Activated T-helper 1 cell treated with anti-CD3 and anti-CD28 coated beads, Interleukin-12 subunit alpha, Interleukin-12 subunit beta, Interleukin-2, Interleukin-4 antibody, amounts not matched to agents 30 ng/mL and 10 ng/mL and 1 ng/mL, durations not matched to agents 14 hours and 24 hours and 36 hours (primary cell): ENCODE measurements at regions of chr10 and their contacts with region 1.

Region 1: DNA sequence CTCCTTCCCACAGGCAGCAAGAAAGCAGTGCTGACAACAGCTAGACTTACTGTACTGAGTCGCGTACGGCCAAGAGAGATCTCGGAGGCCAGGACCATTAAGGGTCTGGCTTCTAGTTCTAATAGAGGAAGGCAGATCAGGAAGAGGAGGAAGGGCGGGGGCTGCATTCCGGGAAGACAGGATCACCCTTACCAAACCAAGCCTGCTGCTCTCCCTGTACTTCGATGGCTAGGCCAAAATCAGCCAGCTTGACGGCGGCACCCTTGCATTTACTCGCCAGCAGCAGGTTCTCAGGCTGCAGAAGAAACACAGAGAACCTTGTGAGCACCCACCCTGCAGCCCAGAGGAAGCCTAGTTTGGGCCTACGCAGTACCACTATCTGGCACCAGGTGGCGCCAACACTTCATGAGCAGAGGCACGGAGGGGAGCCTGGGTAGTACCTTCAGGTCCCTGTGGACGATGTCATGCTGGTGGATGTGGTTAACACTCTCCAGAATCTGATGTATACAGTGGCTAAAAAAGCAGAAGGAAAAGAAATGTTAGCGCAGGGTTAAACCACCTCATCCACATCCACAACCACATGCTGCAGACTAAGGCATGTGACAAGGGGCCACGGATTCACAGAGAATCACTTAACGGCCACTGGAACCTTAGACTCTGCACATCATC is 25.4 kb downstream of the CAMK2G start:
- DNase-seq: peak; percentile 88
- H3K4me3 Mint-ChIP-seq: peak overlapping the region; percentile 64
- H3K27ac Mint-ChIP-seq: peak overlapping the region; percentile 78
- H3K4me1 Mint-ChIP-seq: peaks cover 13% of the 10 kb centered on the region
- H3K27me3 Mint-ChIP-seq: peaks cover 1% of the 10 kb centered on the region

Region 2: DNA sequence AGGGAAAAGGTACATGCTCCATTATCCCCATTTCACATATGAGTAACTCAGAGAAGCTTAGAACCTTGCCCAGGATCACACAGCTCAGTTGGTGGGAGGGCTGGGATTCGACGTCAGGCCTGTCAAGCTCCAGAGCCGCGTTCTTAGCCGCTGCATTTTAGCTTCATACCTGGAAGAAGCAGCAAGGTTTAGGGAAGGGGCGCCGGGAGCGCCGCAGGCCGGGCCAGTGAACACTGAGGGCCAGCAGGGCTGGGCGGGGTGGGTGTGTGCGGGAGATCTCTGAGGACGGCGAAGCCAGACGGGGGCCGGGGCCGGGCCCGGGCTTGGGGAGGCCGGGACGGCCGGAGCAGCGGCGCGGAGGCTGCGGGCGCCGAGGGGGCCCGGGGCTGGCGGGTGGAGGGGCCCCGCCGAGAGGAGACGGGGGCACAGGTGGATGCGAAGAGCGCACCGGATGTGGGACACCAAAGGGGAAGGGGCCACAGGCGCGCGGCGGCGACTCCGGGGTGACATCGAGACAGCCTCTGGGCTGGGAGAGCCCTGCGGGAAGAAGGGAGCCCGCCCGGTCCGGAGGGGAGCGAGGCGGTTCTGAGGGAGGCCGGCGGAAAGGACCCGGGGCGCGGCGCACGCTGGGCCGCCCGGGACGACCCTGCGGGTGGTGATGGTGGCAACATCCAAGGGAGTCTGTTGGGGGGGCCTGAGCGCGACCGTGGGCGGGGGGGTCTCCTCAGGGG is 38.1 kb before region 1 on chr10:
- intact Hi-C with region 1: loop called (anchors 1 kb)
- DNase-seq: peak; percentile 54
- H3K4me3 Mint-ChIP-seq: peak overlapping the region; percentile 97
- H3K27ac Mint-ChIP-seq: peak overlapping the region; percentile 98
- H3K4me1 Mint-ChIP-seq: peaks cover 50% of the 10 kb centered on the region
- H3K27me3 Mint-ChIP-seq: no peaks in the 10 kb centered on the region

Region 3: GRCh38 chr10:73879296-73880173 is 30.6 kb after region 1 on chr10:
- intact Hi-C with region 1: loop called (anchors 1 kb)
- DNase-seq: peak; percentile 90
- H3K4me3 Mint-ChIP-seq: no peak overlapping the region
- H3K27ac Mint-ChIP-seq: peak overlapping the region; percentile 53
- H3K4me1 Mint-ChIP-seq: peaks cover 53% of the 10 kb centered on the region
- H3K27me3 Mint-ChIP-seq: peaks cover 16% of the 10 kb centered on the region

Region 4: GRCh38 chr10:74058658-74059057 is 209.7 kb after region 1 on chr10:
- intact Hi-C with region 1: loop called (anchors 1 kb)
- DNase-seq: no peak
- H3K4me3 Mint-ChIP-seq: no peak overlapping the region
- H3K27ac Mint-ChIP-seq: peak overlapping the region; percentile 18
- H3K4me1 Mint-ChIP-seq: peaks cover 45% of the 10 kb centered on the region
- H3K27me3 Mint-ChIP-seq: peaks cover 4% of the 10 kb centered on the region

Region 5: GRCh38 chr10:74103560-74104248 is 254.7 kb after region 1 on chr10:
- intact Hi-C with region 1: loop called (anchors 1 kb)
- DNase-seq: no peak
- H3K4me3 Mint-ChIP-seq: no peak overlapping the region
- H3K27ac Mint-ChIP-seq: no peak overlapping the region
- H3K4me1 Mint-ChIP-seq: peaks cover 8% of the 10 kb centered on the region
- H3K27me3 Mint-ChIP-seq: no peaks in the 10 kb centered on the region